A673 (cell line): ENCODE measurements at regions of chr17 and their contacts with region 1.

Region 1: DNA sequence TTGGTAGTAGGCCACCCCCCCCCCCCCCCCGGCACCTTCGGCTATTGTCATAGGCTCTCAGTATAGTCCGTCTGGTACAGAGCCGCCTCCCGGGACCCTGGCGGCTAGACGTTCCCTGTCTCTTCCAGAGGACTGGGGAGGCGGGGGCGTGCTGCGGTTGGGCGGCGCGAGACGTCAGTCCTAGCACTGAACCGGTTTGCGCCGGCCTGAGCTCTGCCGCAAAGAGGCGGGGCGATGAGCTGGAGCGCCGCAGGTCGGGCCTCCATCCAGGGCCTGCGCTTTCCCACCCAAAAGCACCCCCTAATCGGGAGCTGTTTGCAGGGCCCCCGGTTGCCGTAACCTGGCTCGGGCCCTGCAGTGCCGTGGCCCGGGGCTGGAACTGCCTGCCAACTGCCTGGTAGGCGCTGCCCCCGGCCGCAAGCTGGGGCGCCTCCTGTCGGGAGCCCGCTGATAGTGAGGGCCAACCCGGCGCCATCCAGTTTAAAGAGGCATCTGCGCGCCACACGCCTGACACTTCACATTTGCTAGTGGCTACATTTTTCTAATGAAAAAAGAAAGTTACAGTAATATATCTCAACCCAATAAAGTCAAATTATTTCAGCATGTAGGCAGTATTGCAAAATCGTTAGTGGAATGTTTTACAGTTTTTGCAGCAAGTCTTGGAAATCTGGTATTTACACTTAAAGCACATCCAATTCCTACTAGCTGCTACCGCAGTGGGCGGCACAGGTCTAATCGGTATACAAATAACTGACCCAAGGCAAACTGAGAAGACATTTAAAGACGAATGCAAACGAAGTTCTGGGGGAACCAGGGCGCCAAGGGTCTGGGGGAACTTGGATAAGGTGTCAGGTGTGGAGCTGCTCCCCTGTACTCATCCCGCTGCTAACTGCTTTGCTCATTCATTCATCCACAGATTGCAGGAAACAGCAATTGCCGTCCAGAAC is 748 bp upstream of the USP22 start:
- DNase-seq: peak; percentile 99
- H3K4me3 ChIP-seq: peak overlapping the region; percentile 61
- H3K27ac ChIP-seq: peak overlapping the region; percentile 95
- H3K4me1 ChIP-seq: peaks cover 14% of the 10 kb centered on the region
- H3K27me3 ChIP-seq: no peaks in the 10 kb centered on the region
- CTCF ChIP-seq: peak; percentile 91

Region 2: GRCh38 chr17:19648475-19649406 is 1394.8 kb before region 1 on chr17 and contains the start of gene ALDH3A2:
- CTCF ChIA-PET with region 1: no interaction called
- POLR2A ChIA-PET with region 1: interaction called, 11 read pairs
- intact Hi-C with region 1: no loop called
- DNase-seq: peak; percentile 98
- H3K4me3 ChIP-seq: peak within 1 kb of the TSS; percentile 81
- H3K27ac ChIP-seq: peak within 1 kb of the TSS; percentile 79
- H3K4me1 ChIP-seq: peaks cover 31% of the 10 kb centered on the region
- H3K27me3 ChIP-seq: no peaks in the 10 kb centered on the region
- CTCF ChIP-seq: 0 out of 2 replicates have a peak, but pooled peaks have one; percentile 14
- total RNA-seq, gene ALDH3A2: 97.0 and 97.3 TPM in 2 replicates

Region 3: GRCh38 chr17:21058098-21058893 is 14.7 kb after region 1 on chr17:
- CTCF ChIA-PET with region 1: no interaction called
- POLR2A ChIA-PET with region 1: interaction called, 10 read pairs
- intact Hi-C with region 1: no loop called
- DNase-seq: peak; percentile 51
- H3K4me3 ChIP-seq: no peak overlapping the region
- H3K27ac ChIP-seq: no peak overlapping the region
- H3K4me1 ChIP-seq: no peaks in the 10 kb centered on the region
- H3K27me3 ChIP-seq: no peaks in the 10 kb centered on the region
- CTCF ChIP-seq: no peak

Region 4: DNA sequence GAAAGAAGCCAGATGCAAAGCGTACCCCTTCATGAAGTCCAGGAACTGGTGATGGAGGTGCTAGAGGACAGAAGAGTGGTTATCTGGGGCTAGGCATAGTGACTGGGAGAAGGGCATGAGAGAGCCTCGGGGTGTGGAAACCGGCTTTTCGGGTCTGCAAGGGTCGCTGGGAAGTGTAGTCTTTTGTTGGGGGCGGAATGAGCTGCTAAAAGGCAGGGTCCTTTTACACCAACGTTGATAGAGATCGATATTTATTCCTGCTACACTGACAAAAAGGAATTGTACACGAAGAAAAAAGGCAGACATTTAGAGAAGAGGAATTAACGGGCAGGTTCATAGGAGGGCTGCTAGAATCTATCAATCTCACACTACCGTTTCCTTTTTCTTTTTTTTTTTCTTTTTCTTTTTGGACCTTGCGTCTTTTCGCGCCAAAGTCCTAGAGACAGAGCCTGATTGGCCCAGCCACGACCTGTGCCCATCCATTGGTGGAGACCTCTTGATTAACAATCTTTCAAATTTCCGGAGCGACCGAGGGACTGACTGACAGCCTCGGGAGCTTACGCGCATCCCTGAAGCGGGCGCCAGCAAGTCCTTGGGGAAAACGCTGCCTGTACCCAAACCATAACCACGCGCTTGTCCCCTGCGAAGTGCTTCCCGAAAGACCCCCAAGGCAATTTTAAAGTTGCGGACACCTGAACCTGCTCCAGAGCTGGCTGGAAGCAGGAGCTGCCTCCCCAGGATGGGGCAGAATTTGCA is 55.6 kb after region 1 on chr17:
- CTCF ChIA-PET with region 1: interaction called, 13 read pairs
- POLR2A ChIA-PET with region 1: interaction called, 12 read pairs
- intact Hi-C with region 1: loop called (anchors 1 kb)
- DNase-seq: peak; percentile 97
- H3K4me3 ChIP-seq: peak overlapping the region; percentile 66
- H3K27ac ChIP-seq: peak overlapping the region; percentile 91
- H3K4me1 ChIP-seq: peaks cover 4% of the 10 kb centered on the region
- H3K27me3 ChIP-seq: no peaks in the 10 kb centered on the region
- CTCF ChIP-seq: no peak

Region 5: DNA sequence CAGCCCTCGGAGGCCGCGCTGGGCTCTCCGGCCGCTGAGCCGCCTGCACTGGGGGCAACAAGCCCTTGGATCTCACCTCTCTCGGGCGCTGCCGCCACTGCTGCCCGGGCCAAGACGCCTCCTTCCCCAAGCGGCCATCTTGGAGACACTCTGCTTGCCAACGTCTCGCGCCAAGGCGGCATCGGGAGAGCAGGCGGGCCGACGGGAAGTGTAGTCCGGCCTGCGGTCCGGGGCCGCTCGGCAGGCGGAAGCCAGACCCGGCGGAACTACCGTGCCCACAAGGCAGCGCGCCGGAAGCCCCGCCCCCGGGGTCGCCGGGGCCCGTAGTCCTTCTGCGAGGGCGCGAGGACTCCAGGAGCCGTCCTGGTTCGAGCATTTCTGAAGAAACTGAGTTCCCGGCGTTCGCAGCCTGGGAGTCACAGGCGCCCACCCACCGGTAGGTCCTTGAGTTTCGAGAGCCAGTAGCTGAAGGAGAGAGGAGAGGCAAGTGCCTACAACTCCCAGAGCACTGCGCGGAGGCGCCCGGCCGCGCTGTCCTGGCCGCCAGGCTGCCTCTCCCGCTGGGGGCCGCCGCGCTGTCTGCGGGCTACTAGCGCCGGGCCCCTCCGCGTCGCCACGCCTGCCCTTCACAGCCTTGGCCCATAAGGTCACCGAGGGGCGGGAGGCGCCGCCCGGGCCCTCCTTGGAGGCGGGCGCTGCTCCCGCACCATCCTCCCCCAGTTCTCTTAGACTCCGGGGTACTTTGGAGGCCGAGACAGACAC is 170.6 kb after region 1 on chr17 and contains the start of gene TMEM11:
- CTCF ChIA-PET with region 1: no interaction called
- POLR2A ChIA-PET with region 1: no interaction called
- intact Hi-C with region 1: loop called (anchors 5 kb)
- DNase-seq: peak; percentile 97
- H3K4me3 ChIP-seq: peak within 1 kb of the TSS; percentile 99
- H3K27ac ChIP-seq: peak within 1 kb of the TSS; percentile 97
- H3K4me1 ChIP-seq: no peaks in the 10 kb centered on the region
- H3K27me3 ChIP-seq: no peaks in the 10 kb centered on the region
- CTCF ChIP-seq: no peak
- total RNA-seq, gene TMEM11: 46.5 and 47.6 TPM in 2 replicates

Region 6: GRCh38 chr17:21284319-21285163 is 241.0 kb after region 1 on chr17 and contains the start of gene MAP2K3:
- CTCF ChIA-PET with region 1: no interaction called
- POLR2A ChIA-PET with region 1: no interaction called
- intact Hi-C with region 1: loop called (anchors 2 kb)
- DNase-seq: peak; percentile 99
- H3K4me3 ChIP-seq: peak within 1 kb of the TSS; percentile 88
- H3K27ac ChIP-seq: peak within 1 kb of the TSS; percentile 94
- H3K4me1 ChIP-seq: peaks cover 36% of the 10 kb centered on the region
- H3K27me3 ChIP-seq: no peaks in the 10 kb centered on the region
- CTCF ChIP-seq: no peak
- total RNA-seq, gene MAP2K3: 39.0 and 44.0 TPM in 2 replicates